Gastrocnemius medialis (tissue), 4 donors: ENCODE measurements at regions of chr9 and their contacts with region 1.

Region 1: DNA sequence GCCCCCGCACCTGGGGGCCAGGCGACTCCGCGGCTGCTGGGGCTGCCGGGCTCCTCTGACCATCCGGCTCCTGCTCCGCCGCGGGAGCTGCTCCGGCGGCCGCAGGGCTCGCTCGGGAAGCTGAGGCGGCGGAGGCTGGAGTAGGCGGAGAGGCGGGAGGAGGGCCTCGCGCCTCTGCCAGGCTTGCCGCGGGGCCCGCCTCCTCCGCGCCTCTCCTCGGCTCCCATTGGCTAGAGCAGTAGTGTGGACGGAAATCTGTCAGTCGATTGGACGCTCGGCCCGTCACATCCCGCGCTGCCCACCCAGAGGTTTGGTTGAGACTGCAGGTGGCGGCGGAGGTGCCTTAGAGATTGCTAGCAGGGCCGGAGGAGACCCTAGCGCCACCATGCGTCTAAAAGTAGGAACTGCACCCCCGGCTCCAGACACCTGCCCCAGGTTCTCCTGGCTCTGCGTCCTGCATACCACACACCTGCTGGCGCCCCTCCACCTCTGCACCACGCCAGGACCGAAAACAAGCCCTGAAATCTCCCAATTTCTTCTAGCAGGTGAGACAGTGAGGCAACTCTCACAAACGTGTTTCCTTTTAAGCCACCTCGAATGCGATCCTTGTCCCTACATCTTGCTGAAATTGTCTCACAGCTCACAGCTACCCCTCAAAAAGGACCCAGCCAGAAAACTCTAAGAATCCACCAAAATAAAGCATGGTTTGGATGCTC is at the start of gene SCAI:
- DNase-seq: peak; percentile 99
- ATAC-seq: peak; percentile 99 to 100
- H3K4me3 ChIP-seq: peak within 1 kb of the TSS; percentile 64 to 78 (median 76)
- H3K27ac ChIP-seq: peak within 1 kb of the TSS; percentile 61 to 81 (median 80)
- H3K4me1 ChIP-seq: peaks cover 10 to 15% of the 10 kb centered on the region in 2 donors
- H3K27me3 ChIP-seq: no peaks in the 10 kb centered on the region
- CTCF ChIP-seq: peak; percentile 98 to 100 (median 99)
- POLR2A ChIP-seq: no peak
- total RNA-seq, gene SCAI: 1.1 to 4.7 (median 3.4) TPM

Region 2: GRCh38 chr9:124868511-124869465 is 274.7 kb before region 1 on chr9:
- in situ Hi-C with region 1: no loop called
- intact Hi-C with region 1: loop called (anchors 5 kb)
- DNase-seq: peak; percentile 82 to 86
- ATAC-seq: peak; percentile 82 to 90
- H3K4me3 ChIP-seq: peak overlapping the region; percentile 80 to 100 (median 88)
- H3K27ac ChIP-seq: peak overlapping the region; percentile 93 to 100 (median 96)
- H3K4me1 ChIP-seq: peaks cover 51 to 52% of the 10 kb centered on the region in 2 donors
- H3K27me3 ChIP-seq: no peaks in the 10 kb centered on the region
- CTCF ChIP-seq: peak in 1 of 5 experiments; percentile 3
- POLR2A ChIP-seq: peak; percentile 96 to 99

Region 3: DNA sequence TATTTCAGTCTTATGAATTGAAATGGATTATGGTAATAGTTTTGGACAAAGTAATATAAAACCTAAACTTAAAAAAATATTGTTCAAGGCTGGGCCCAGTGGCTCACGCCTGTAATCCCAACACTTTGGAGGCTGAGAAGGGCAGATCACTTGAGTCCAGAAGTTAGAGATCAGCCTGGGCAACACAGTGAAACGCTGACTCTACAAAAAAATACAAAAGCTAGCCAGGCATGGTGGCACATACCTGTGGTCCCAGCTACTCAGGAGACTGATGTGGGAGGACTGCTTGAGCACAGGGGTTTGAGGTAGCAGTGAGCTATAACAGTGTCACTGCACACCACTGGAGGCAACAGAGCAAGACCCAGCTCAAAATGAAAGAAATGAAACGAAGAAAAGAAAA is 82.1 kb before region 1 on chr9:
- in situ Hi-C with region 1: no loop called
- intact Hi-C with region 1: no loop called
- DNase-seq: no peak
- ATAC-seq: no peak
- H3K4me3 ChIP-seq: no peak overlapping the region
- H3K27ac ChIP-seq: no peak overlapping the region
- H3K4me1 ChIP-seq: no peaks in the 10 kb centered on the region
- H3K27me3 ChIP-seq: no peaks in the 10 kb centered on the region
- CTCF ChIP-seq: no peak
- POLR2A ChIP-seq: no peak

Region 4: DNA sequence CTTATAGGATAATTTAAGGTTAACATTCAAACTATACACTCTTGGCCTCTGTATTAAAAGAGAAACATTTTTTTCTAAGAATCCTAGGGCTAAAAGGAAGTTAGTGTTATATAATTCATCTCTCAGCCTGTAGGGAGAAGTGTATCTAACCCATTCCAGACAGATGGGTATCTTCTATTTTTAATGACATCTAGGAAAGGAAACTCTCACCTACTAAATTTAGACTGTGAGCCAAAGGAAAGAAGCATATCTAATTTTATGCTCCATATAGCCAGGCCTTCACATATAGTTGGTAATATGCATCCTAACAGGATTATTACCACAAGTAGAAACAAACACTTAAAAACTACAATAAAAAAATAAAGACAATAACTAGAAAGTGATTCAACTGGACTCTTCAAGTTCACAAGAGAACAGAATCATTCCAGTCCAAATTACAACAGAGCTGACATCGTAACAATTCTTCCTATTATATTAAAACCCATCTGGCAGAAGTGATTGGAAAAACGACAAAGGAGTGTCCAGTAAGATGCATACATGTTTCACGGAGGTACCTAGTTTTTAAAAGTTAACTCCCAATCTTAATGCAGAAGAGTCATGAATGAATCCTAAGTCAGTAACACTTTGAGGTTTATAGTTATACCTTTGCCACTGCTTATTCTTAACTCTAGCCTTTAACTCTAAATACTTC is 39.6 kb before region 1 on chr9:
- in situ Hi-C with region 1: no loop called
- intact Hi-C with region 1: loop called (anchors 1 kb)
- DNase-seq: no peak
- ATAC-seq: peak; percentile 81
- H3K4me3 ChIP-seq: no peak overlapping the region
- H3K27ac ChIP-seq: peak overlapping the region in 2 of 4 donors; percentile 38 to 63
- H3K4me1 ChIP-seq: peaks cover 32 to 42% of the 10 kb centered on the region in 2 donors
- H3K27me3 ChIP-seq: no peaks in the 10 kb centered on the region
- CTCF ChIP-seq: no peak
- POLR2A ChIP-seq: no peak